ENCODE measurements at regions of chr1 and their contacts with region 1.

Region 1: DNA sequence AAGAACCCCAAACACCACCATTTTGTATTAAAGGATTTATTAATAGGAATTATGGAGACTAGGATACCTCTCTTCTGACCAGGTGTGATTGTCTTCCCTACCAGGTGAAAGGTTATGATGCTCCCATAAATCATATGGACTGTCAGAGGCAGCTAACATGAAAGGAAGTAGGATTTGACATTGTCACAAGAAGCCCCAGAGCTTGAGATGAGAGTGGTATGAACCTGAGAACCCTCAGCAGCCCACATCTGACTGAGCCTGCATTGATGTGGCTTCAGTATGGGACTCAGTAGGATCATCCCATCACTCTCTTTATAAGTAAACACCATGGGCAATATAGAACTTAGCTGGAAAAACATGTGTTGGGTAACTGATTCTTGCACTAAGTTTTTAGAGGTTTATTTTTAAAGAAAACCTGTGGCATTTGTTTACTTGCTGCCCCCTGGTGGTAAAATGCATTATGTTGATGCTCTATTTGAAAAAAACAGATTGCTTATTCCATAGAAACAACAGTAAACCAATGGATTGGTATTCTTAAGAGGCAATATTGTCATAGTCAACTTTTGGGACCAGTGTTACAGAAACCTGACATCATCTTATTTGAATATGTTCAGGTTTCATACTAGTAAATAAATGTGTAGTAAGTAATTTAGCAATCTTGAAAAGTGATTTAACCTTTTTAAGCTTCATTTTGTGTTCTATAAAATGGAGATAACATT is 16.6 kb upstream of the CACYBP start:
- DNase-seq: peak in 21 of 35 experiments; percentile 15 to 80 (median 41)
- ATAC-seq: no peak
- H3K4me3 ChIP-seq: no peak overlapping the region
- H3K4me3 Mint-ChIP-seq: no peak overlapping the region
- H3K27ac ChIP-seq: no peak overlapping the region
- H3K27ac Mint-ChIP-seq: peak overlapping the region; percentile 49 to 64
- H3K4me1 ChIP-seq: peaks cover 0 to 5% of the 10 kb centered on the region in 2 experiments
- H3K4me1 Mint-ChIP-seq: peaks cover 20 to 42% (median 41%) of the 10 kb centered on the region in 3 donors
- H3K27me3 ChIP-seq: no peaks in the 10 kb centered on the region
- H3K27me3 Mint-ChIP-seq: no peaks in the 10 kb centered on the region

Region 2: GRCh38 chr1:173954179-173954578 is 1029.0 kb before region 1 on chr1:
- CTCF ChIA-PET with region 1: no interaction called
- POLR2A ChIA-PET with region 1: interaction called in 1 of 2 experiments, 16 read pairs
- DNase-seq: no peak
- ATAC-seq: no peak
- H3K4me3 ChIP-seq: no peak overlapping the region
- H3K4me3 Mint-ChIP-seq: no peak overlapping the region
- H3K27ac ChIP-seq: no peak overlapping the region
- H3K27ac Mint-ChIP-seq: peak overlapping the region in 1 of 2 donors; percentile 24
- H3K4me1 ChIP-seq: no peaks in the 10 kb centered on the region
- H3K4me1 Mint-ChIP-seq: peaks cover 0 to 14% (median 13%) of the 10 kb centered on the region in 3 donors
- H3K27me3 ChIP-seq: no peaks in the 10 kb centered on the region
- H3K27me3 Mint-ChIP-seq: no peaks in the 10 kb centered on the region

Region 3: DNA sequence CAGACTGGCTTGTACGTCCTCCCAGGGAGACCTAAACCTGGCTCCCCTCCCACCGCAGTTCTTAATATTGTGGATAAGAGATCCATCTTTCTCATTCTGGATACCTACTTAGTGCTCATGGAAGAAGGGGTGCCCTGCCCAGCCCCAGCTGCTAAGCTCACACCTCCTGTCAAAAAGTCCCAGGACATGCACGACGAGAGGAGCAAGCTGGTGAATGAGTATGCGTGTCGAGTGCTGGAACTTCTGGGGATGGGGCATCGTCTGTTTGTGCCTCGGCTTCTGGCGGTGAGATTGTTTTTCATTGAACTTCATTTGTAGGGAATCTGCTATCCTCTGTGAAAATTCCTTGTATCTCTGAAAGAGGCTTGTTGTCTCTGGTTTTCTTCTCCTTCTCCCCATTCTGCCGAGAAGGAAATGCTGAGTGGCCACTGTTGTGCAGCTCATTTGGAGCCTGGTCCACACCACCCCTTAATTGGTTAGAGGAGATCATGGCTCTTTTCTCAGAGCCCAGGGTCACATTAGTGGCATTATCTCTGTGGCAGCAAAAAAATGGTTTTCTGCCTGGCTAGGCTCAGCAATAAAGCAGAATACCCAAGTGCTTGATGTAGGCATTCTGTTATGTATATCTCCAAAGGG is 182.8 kb before region 1 on chr1:
- CTCF ChIA-PET with region 1: interaction called, 3 to 16 read pairs
- POLR2A ChIA-PET with region 1: interaction called in 1 of 2 experiments, 4 read pairs
- DNase-seq: peak in 17 of 35 experiments; percentile 1 to 43 (median 14)
- ATAC-seq: peak; percentile 6 to 14 (median 10)
- H3K4me3 ChIP-seq: peak overlapping the region; percentile 57 to 64
- H3K4me3 Mint-ChIP-seq: no peak overlapping the region
- H3K27ac ChIP-seq: peak overlapping the region; percentile 58
- H3K27ac Mint-ChIP-seq: no peak overlapping the region
- H3K4me1 ChIP-seq: peaks cover 3 to 11% of the 10 kb centered on the region in 2 experiments
- H3K4me1 Mint-ChIP-seq: peaks cover 0 to 16% (median 5%) of the 10 kb centered on the region in 3 donors
- H3K27me3 ChIP-seq: no peaks in the 10 kb centered on the region
- H3K27me3 Mint-ChIP-seq: no peaks in the 10 kb centered on the region

Region 4: DNA sequence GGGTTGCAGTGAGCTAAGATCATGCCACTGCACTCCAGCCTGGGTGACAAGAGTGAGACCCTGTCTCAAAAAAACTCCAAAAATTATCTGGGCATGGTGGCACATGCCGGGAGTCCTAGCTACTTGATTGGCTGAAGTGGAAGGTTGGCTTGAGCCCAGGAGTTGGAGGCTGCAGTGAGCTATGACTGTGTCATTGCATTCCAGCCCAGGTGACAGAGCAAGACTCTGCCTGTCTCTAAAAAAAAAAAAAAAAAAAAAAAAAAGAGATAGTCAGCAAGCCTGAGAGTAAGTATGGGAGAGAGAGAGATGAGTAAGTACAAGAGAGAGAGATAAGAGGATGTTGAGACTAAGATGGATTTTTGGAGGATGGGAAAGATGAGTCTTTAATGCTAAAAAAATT is 164.2 kb before region 1 on chr1:
- CTCF ChIA-PET with region 1: interaction called in 1 of 2 experiments, 5 read pairs
- POLR2A ChIA-PET with region 1: interaction called in 1 of 2 experiments, 11 read pairs
- DNase-seq: no peak
- ATAC-seq: no peak
- H3K4me3 ChIP-seq: no peak overlapping the region
- H3K4me3 Mint-ChIP-seq: no peak overlapping the region
- H3K27ac ChIP-seq: no peak overlapping the region
- H3K27ac Mint-ChIP-seq: no peak overlapping the region
- H3K4me1 ChIP-seq: no peaks in the 10 kb centered on the region
- H3K4me1 Mint-ChIP-seq: peaks cover 0 to 8% (median 3%) of the 10 kb centered on the region in 3 donors
- H3K27me3 ChIP-seq: no peaks in the 10 kb centered on the region
- H3K27me3 Mint-ChIP-seq: no peaks in the 10 kb centered on the region

Region 5: DNA sequence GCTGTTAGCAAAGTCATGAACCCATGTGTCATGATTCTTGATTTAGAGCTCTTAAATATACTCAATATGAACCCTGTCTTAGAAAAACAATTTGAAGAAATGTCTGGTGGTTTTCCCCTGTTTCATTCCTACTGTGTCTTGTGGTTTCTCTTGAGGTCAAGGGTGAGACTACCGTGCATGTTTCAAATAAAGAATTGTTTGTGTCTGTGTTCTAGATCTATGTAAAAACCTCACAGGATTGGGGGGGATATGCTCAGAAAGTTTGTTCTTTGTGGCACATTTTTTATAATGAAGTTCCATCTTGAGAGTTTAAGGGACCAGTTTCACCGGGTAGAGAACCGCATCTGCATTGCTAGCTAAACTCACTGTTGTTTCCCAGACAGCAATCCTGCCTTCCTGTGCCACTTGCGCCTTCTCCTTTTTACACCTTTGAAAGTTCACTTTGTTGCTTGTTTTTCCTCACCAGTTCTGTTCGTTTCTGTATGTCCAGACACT is 14.3 kb before region 1 on chr1:
- CTCF ChIA-PET with region 1: interaction called, 5 to 13 read pairs
- POLR2A ChIA-PET with region 1: interaction called, 4 to 5 read pairs
- DNase-seq: peak in 25 of 35 experiments; percentile 8 to 87 (median 34)
- ATAC-seq: peak; percentile 68 to 74 (median 71)
- H3K4me3 ChIP-seq: peak overlapping the region in 1 of 2 donors; percentile 13
- H3K4me3 Mint-ChIP-seq: peak overlapping the region; percentile 70 to 75 (median 74)
- H3K27ac ChIP-seq: peak overlapping the region; percentile 81
- H3K27ac Mint-ChIP-seq: peak overlapping the region; percentile 93 to 95
- H3K4me1 ChIP-seq: peaks cover 44 to 69% of the 10 kb centered on the region in 2 experiments
- H3K4me1 Mint-ChIP-seq: peaks cover 78 to 82% (median 79%) of the 10 kb centered on the region in 3 donors
- H3K27me3 ChIP-seq: no peaks in the 10 kb centered on the region
- H3K27me3 Mint-ChIP-seq: no peaks in the 10 kb centered on the region

Region 6: GRCh38 chr1:175009532-175009931 is 26.4 kb after region 1 on chr1:
- CTCF ChIA-PET with region 1: no interaction called
- POLR2A ChIA-PET with region 1: no interaction called
- DNase-seq: no peak
- ATAC-seq: no peak
- H3K4me3 ChIP-seq: no peak overlapping the region
- H3K4me3 Mint-ChIP-seq: no peak overlapping the region
- H3K27ac ChIP-seq: no peak overlapping the region
- H3K27ac Mint-ChIP-seq: peak overlapping the region in 1 of 2 donors; percentile 34
- H3K4me1 ChIP-seq: no peaks in the 10 kb centered on the region
- H3K4me1 Mint-ChIP-seq: peaks cover 19 to 22% (median 19%) of the 10 kb centered on the region in 3 donors
- H3K27me3 ChIP-seq: no peaks in the 10 kb centered on the region
- H3K27me3 Mint-ChIP-seq: no peaks in the 10 kb centered on the region